Left lung (tissue), 14 donors: ENCODE measurements at regions of chr22 and their contacts with region 1.

Region 1: GRCh38 chr22:31399211-31400028 is at the start of gene DRG1:
- DNase-seq: peak; percentile 97 to 99 (median 98)
- ATAC-seq: peak; percentile 99
- H3K4me3 ChIP-seq: peak within 1 kb of the TSS; percentile 80 to 84
- H3K27ac ChIP-seq: peak within 1 kb of the TSS; percentile 74 to 80
- H3K4me1 ChIP-seq: peaks cover 7 to 25% of the 10 kb centered on the region in 2 donors
- H3K27me3 ChIP-seq: no peaks in the 10 kb centered on the region
- CTCF ChIP-seq: peak in 1 of 2 donors; percentile 17
- polyA plus RNA-seq, gene DRG1: 68.7 to 79.8 (median 70.4) TPM

Region 2: GRCh38 chr22:31210556-31211421 is 188.6 kb before region 1 on chr22:
- intact Hi-C with region 1: no loop called
- DNase-seq: peak in 1 of 4 donors; percentile 66
- ATAC-seq: no peak
- H3K4me3 ChIP-seq: no peak overlapping the region
- H3K27ac ChIP-seq: peak overlapping the region; percentile 75 to 79
- H3K4me1 ChIP-seq: peaks cover 10 to 80% of the 10 kb centered on the region in 2 donors
- H3K27me3 ChIP-seq: no peaks in the 10 kb centered on the region
- CTCF ChIP-seq: no peak

Region 3: DNA sequence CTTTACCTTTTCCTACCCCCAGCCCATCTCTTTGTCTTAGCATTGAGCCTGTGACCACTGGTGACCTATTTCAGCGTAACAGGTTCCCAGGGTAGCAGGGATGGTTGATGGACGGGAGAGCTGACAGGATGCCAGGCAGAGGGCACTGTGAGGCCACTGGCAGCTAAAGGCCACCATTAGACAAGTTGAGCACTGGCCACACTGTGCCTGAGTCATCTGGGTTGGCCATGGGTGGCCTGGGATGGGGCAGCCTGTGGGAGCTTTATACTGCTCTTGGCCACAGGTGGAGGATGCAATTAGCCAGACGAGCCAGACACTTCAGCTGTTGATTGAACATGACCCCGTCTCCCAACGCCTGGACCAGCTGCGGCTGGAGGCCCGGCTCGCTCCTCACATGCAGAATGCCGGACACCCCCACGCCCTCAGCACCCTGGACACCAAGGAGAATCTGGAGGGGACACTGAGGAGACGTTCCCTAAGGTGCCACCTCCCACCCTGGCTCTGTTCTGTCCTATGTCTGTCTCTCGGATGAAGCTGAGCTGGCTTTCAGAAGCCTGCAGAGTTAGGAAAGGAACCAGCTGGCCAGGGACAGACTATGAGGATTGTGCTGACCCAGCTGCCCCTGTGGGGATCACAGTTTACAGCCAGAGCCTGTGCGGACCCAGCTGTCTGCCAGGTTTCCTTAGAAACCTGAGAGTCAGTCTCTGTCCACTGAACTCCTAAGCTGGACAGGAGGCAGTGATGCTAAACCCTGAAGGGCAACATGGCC is 136.9 kb before region 1 on chr22:
- intact Hi-C with region 1: no loop called
- DNase-seq: no peak
- ATAC-seq: no peak
- H3K4me3 ChIP-seq: no peak overlapping the region
- H3K27ac ChIP-seq: no peak overlapping the region
- H3K4me1 ChIP-seq: peaks cover 0 to 12% of the 10 kb centered on the region in 2 donors
- H3K27me3 ChIP-seq: no peaks in the 10 kb centered on the region
- CTCF ChIP-seq: no peak

Region 4: DNA sequence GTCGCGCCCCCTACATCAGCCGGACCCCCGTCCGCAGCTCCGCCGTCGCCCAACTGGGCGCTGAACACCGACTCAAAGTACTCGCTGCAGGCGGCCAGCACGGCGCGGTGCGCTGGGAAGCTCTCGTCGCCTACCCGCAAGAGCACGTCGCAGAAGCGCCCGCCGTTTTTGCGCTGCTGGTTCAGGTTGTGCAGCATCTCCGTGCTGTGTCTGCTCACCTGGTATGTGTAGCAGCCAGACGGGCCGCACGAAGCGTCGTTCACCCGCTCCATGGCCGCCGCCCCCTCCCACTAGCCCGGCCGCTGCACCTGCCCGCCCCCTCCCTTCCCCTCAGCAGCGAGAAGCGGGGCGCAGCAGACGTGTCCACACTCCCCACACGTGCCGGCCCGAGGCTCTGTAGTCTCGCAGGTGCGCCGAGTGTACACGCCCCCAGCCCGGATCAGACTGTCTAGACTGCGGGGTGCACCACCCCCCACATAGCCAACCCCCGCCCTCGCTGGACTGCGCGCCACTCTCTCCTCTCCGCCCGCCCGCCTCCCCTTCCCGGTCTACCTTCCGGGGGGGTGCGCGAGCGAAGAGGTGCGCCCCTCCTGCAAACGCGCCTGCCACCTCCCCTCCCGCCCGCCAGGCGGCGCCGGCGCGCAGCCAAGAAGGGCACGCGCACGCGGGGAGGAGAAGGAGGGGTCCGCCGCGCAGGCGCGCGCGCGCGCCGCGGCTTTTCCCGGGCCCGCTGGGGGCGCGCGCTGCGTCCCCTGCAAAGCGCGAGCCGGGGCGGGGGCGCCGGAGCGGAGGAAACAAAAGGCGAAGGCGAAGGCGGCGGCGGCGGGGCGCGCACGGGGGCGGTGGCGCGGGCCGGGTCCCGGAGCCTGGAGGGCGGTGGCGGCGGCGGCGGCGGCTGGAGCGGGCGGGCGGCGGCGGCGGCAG is 53.8 kb before region 1 on chr22:
- intact Hi-C with region 1: loop called in 1 of 2 experiments (anchors 10 kb)
- DNase-seq: peak; percentile 82 to 96 (median 91)
- ATAC-seq: peak; percentile 62
- H3K4me3 ChIP-seq: peak overlapping the region; percentile 55 to 73
- H3K27ac ChIP-seq: peak overlapping the region; percentile 79 to 89
- H3K4me1 ChIP-seq: peaks cover 30 to 58% of the 10 kb centered on the region in 2 donors
- H3K27me3 ChIP-seq: no peaks in the 10 kb centered on the region
- CTCF ChIP-seq: peak; percentile 86 to 87